ENCODE measurements at regions of chr22 and their contacts with region 1.

Region 1: DNA sequence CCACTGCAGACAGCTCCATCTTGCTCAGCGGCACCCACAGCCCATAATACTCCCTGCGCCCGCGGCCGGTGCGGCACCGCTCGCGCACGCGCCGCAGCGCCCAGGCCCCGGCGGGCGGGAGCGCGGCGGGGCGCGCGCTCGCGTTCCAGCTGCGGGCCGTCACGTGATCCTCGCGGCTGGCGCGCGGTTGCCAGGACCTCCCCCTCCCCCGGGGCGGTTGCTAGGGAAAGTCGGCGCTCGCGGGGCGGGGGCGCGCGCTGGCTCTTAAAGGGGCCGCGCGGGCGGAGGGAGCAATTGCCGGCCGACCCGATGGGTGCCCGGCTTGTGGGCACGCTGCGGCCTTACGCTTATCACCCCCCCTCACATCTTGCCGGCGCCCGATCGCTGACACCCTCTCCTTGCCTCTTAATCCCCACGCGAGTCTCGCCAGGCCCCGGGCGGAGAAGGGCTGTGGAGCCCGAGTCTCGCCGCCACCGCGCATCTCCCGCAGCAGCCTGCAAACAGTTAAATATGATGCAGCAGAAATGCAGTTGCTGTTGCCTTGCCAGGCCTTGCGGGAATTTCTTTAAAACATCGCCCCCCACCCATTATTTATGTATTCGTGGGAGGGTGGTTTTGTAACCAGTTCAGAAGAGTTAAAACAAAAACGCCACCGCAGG is at the start of gene CBX6:
- DNase-seq: peak; percentile 88 to 96 (median 96)
- ATAC-seq: peak; percentile 79 to 81
- H3K4me3 Mint-ChIP-seq: peak within 1 kb of the TSS; percentile 89 to 97 (median 93)
- H3K27ac Mint-ChIP-seq: peak within 1 kb of the TSS; percentile 79 to 96 (median 92)
- H3K4me1 Mint-ChIP-seq: peaks cover 26 to 56% (median 53%) of the 10 kb centered on the region in 4 donors
- H3K27me3 Mint-ChIP-seq: peaks cover 0 to 9% (median 0%) of the 10 kb centered on the region in 5 donors
- polyA plus RNA-seq, gene CBX6: 5.8 to 6.5 (median 6.4) TPM

Region 2: DNA sequence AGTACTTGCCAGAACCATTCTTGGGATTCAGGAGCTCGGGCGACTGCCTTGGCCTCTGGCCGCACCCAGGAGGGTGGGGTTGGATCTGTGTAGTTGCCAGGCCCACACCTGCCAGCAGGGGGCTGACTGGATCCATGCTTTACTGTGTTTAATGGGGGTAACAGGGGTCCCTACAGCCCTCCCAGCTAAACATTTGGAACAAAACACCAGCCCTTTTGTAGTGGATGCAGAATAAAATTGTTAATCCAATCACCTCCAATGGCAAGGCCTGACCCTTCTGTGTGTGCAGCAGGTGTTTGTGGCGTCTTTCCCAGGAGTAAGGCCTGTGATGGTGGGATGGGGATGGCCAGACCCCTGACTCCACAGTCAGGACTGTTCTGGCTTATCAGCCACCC is 139.0 kb before region 1 on chr22:
- POLR2A ChIA-PET with region 1: interaction called, 10 read pairs
- DNase-seq: peak; percentile 46 to 84 (median 58)
- ATAC-seq: peak; percentile 65 to 73
- H3K4me3 Mint-ChIP-seq: peak overlapping the region in 3 of 10 donors; percentile 50 to 68 (median 67)
- H3K27ac Mint-ChIP-seq: peak overlapping the region; percentile 79 to 97 (median 90)
- H3K4me1 Mint-ChIP-seq: peaks cover 30 to 70% (median 59%) of the 10 kb centered on the region in 4 donors
- H3K27me3 Mint-ChIP-seq: no peaks in the 10 kb centered on the region

Region 3: DNA sequence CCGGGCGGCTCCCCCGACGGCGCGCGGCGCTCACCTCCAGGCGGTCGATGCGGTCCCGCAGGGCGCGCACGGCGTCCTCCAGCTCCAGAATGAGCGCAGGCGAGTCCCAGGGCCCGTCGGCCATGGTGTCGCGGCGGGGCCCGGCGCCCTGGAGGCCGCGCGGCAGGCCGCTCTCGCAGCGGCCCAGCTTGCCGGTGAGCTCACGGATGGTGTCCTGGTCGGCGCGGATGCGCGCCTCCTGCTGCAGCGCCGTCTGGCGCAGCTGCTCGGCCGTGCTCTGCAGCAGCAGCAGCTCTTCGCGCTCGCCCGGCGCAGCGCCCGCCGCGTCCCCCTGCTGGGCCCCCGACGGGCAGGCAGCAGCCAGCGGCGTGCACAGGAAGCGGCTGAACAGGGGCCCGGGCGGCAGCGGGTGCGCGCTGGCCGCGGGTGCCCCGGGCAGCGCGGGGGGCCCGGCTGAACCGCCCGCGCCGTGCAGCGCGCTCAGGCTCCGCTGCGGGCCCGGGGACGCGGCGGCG is 29.0 kb before region 1 on chr22:
- POLR2A ChIA-PET with region 1: interaction called, 16 read pairs
- DNase-seq: peak; percentile 39 to 79 (median 53)
- ATAC-seq: peak; percentile 85 to 88
- H3K4me3 Mint-ChIP-seq: peak overlapping the region in 2 of 10 donors; percentile 22 to 85
- H3K27ac Mint-ChIP-seq: no peak overlapping the region
- H3K4me1 Mint-ChIP-seq: peaks cover 19 to 32% (median 28%) of the 10 kb centered on the region in 4 donors
- H3K27me3 Mint-ChIP-seq: peaks cover 0 to 24% (median 6%) of the 10 kb centered on the region in 5 donors

Region 4: DNA sequence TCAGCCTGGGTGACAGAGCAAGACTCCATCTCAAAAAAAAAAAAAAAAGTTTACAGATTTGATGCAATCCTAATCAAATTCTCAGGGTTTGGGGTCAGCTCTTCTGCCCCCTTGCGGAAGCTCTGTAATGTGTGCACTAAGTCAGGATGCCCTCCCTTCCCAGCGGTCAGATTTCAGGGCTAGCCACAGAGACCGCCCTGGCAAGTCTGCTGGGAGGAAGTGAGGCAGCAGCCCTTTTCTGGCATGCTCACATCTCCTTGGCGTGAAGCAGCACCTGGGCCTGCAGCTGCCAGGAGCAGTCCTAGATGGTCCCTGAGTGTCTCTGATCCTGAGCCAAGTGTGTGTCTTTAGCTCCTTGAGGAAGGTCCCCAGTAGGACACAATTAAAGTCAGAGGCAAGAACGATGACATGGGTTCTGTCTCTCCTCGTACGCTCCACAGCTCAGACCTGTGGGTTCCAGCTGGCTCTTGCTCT is 130.9 kb after region 1 on chr22:
- POLR2A ChIA-PET with region 1: interaction called, 30 read pairs
- DNase-seq: peak; percentile 45 to 83 (median 67)
- ATAC-seq: peak; percentile 91 to 95
- H3K4me3 Mint-ChIP-seq: peak overlapping the region in 1 of 10 donors; percentile 14
- H3K27ac Mint-ChIP-seq: peak overlapping the region in 7 of 10 donors; percentile 0 to 75 (median 37)
- H3K4me1 Mint-ChIP-seq: peaks cover 5 to 18% (median 12%) of the 10 kb centered on the region in 4 donors
- H3K27me3 Mint-ChIP-seq: peaks cover 0 to 3% (median 0%) of the 10 kb centered on the region in 5 donors

Region 5: GRCh38 chr22:39152511-39153219 is 280.4 kb after region 1 on chr22 and contains the start of gene CBX7:
- POLR2A ChIA-PET with region 1: interaction called, 14 read pairs
- DNase-seq: peak; percentile 87 to 96 (median 94)
- ATAC-seq: peak; percentile 84 to 89
- H3K4me3 Mint-ChIP-seq: peak within 1 kb of the TSS; percentile 85 to 97 (median 90)
- H3K27ac Mint-ChIP-seq: peak within 1 kb of the TSS; percentile 90 to 98 (median 92)
- H3K4me1 Mint-ChIP-seq: peaks cover 23 to 43% (median 39%) of the 10 kb centered on the region in 4 donors
- H3K27me3 Mint-ChIP-seq: peaks cover 0 to 4% (median 2%) of the 10 kb centered on the region in 5 donors
- polyA plus RNA-seq, gene CBX7: 19.1 to 23.1 (median 19.5) TPM